Activated B cell treated with CpG ODN at 0.5 μM for 24 hours (primary cell): ENCODE measurements at regions of chrX and their contacts with region 1.

Region 1: DNA sequence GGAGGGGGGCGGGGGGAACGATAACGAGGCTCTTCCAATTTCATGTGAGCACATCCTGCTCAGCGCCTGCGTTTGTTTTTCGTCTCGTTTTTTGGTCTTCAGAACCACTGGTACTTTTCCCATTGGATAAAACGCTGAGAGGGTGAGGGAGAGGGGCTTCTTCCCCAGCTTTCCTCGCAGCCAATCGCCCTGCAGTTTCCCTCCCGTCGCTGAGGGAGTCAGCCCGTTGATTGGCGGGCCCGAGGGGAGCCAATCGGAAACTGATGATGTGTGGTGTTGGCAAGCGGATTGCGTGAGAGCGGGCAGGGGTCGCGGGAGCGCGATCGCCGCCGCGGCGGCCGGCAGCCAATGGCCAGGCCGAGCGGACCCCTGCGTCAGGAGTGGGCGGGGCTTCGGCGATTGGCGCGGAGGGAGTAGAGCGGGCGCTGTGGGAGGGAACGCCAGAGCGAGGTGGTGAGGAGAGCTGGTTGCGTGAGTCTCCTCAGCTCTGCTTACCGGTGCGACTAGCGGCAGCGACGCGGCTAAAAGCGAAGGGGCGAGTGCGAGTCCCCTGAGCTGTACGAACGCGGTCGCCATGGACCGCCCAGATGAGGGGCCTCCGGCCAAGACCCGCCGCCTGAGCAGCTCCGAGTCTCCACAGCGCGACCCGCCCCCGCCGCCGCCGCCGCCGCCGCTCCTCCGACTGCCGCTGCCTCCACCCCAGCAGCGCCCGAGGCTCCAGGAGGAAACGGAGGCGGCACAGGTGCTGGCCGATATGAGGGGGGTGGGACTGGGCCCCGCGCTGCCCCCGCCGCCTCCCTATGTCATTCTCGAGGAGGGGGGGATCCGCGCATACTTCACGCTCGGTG is at the start of gene TSPYL2:
- DNase-seq: peak; percentile 85
- ATAC-seq: peak; percentile 92
- H3K4me3 Mint-ChIP-seq: peak within 1 kb of the TSS; percentile 91
- H3K27ac Mint-ChIP-seq: peak within 1 kb of the TSS; percentile 98
- H3K4me1 Mint-ChIP-seq: peaks cover 27% of the 10 kb centered on the region
- H3K27me3 Mint-ChIP-seq: no peaks in the 10 kb centered on the region
- CTCF ChIP-seq: no peak
- total RNA-seq, gene TSPYL2: 48.2 and 49.7 TPM in 2 replicates

Region 2: GRCh38 chrX:53071604-53072417 is 10.3 kb before region 1 on chrX:
- CTCF ChIA-PET with region 1: interaction called, 6 read pairs
- POLR2A ChIA-PET with region 1: interaction called, 16 read pairs
- intact Hi-C with region 1: no loop called
- DNase-seq: peak; percentile 32
- ATAC-seq: peak; percentile 84
- H3K4me3 Mint-ChIP-seq: peak overlapping the region; percentile 85
- H3K27ac Mint-ChIP-seq: peak overlapping the region; percentile 90
- H3K4me1 Mint-ChIP-seq: peaks cover 16% of the 10 kb centered on the region
- H3K27me3 Mint-ChIP-seq: no peaks in the 10 kb centered on the region
- CTCF ChIP-seq: no peak

Region 3: DNA sequence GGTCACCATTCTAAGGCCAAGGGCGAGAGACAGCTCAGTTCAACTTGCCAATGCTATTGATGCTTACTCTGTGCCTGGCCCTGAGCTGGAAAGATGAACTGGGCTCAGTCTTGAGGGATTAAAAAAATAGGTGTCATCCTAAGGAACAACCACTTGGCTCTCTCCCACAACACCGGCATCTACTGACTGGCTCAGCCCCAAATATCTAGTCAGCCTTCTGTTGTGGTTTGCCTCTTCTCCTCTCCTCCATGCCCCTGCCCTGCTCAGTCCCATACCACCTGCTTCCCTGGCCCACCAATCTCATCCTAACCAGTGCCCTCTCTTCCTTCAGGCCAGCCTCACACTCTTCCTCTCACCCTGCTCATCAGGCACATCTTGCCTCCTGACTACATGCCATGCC is 113.3 kb after region 1 on chrX:
- CTCF ChIA-PET with region 1: no interaction called
- POLR2A ChIA-PET with region 1: no interaction called
- intact Hi-C with region 1: no loop called
- DNase-seq: no peak
- ATAC-seq: no peak
- H3K4me3 Mint-ChIP-seq: no peak overlapping the region
- H3K27ac Mint-ChIP-seq: no peak overlapping the region
- H3K4me1 Mint-ChIP-seq: no peaks in the 10 kb centered on the region
- H3K27me3 Mint-ChIP-seq: no peaks in the 10 kb centered on the region
- CTCF ChIP-seq: no peak

Region 4: GRCh38 chrX:53224860-53225797 is 143.0 kb after region 1 on chrX and contains the start of gene KDM5C:
- CTCF ChIA-PET with region 1: no interaction called
- POLR2A ChIA-PET with region 1: interaction called, 13 read pairs
- intact Hi-C with region 1: loop called (anchors 5 kb)
- DNase-seq: peak; percentile 69
- ATAC-seq: peak; percentile 91
- H3K4me3 Mint-ChIP-seq: peak within 1 kb of the TSS; percentile 98
- H3K27ac Mint-ChIP-seq: peak within 1 kb of the TSS; percentile 98
- H3K4me1 Mint-ChIP-seq: peaks cover 33% of the 10 kb centered on the region
- H3K27me3 Mint-ChIP-seq: no peaks in the 10 kb centered on the region
- CTCF ChIP-seq: no peak
- total RNA-seq, gene KDM5C: 109 and 117 TPM in 2 replicates

Region 5: DNA sequence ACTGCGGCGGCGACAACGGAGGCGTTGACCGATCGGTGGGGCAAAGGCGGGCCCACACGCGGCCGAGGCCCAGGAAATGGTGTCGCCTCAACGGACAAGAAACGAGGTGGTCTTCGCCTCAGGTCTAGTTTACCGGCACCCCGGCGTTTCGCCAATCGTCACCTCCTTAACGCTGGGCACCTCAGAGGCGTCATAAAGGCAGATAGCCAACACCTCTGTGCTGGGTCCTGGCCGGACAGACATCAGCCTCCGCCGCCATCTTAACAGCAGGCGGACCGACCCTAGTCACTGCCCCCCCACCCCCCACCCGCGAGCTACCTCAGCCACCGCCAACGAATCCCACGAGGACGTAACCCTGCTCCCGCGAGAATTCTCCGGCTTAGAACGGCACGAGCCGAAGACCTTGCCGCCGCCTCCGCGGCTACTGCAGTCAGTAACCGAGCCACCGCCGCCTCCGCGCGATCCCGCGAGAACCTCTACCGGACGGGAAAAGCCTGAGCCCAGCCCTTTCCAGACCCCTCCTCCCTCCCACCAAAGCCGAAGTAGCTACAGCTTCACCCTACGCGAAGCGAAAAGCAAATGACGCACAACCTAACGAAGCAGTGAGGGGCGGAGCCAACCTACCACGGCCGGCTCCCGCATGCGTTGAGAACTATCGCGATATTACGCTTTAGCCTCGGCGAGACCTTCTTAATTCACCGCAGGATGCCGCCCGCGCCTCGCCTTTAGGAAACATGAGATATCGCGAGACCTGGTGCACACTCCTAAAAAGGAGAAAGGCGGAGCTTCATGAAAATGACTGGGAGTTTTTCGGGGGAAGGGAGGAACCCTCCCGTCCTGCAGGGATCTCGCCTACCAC is 601.6 kb after region 1 on chrX:
- CTCF ChIA-PET with region 1: no interaction called
- POLR2A ChIA-PET with region 1: interaction called, 5 read pairs
- intact Hi-C with region 1: loop called (anchors 10 kb)
- DNase-seq: peak; percentile 69
- ATAC-seq: peak; percentile 68
- H3K4me3 Mint-ChIP-seq: peak overlapping the region; percentile 91
- H3K27ac Mint-ChIP-seq: peak overlapping the region; percentile 97
- H3K4me1 Mint-ChIP-seq: peaks cover 40% of the 10 kb centered on the region
- H3K27me3 Mint-ChIP-seq: no peaks in the 10 kb centered on the region
- CTCF ChIP-seq: no peak